WTC11 (cell line): ENCODE measurements at regions of chr22 and their contacts with region 1.

Region 1: DNA sequence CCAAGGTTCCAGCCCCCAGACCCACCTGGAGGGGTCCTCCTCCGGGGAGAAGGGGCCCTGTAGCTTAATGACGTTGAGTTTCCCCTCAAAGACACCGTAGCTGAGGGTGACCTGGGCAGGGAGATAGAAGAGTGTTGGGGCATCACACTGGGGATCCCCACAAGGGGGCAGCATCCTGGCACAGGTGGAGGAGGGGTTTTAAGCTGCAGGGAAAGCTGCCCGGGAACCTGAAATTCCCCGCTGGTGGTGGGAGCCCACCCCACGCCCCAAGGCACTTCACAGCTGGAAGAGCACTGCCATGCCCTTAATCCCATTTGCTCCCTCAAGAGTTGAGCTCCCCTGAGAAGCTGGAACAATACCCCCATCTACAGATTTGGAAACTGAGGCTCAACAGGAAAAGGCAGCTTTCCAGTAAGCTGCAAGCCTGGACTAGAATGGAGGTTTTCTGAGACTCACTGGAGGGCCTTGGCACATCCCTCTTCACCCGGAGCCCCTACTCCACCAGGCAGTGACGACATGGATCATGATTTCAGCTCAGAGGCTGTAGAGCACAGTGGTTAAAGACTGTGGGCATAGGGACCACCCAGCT is 13.7 kb downstream of the MFNG start:
- DNase-seq: peak; percentile 79
- ATAC-seq: peak; percentile 81
- H3K4me3 Mint-ChIP-seq: no peak overlapping the region
- H3K27ac Mint-ChIP-seq: no peak overlapping the region
- H3K4me1 Mint-ChIP-seq: 0 out of 2 replicates have a peak, but pooled peaks cover 3% of the 10 kb centered on the region
- H3K27me3 Mint-ChIP-seq: no peaks in the 10 kb centered on the region; the same call in 1 of the 2 replicates
- CTCF ChIP-seq: peak; percentile 66

Region 2: DNA sequence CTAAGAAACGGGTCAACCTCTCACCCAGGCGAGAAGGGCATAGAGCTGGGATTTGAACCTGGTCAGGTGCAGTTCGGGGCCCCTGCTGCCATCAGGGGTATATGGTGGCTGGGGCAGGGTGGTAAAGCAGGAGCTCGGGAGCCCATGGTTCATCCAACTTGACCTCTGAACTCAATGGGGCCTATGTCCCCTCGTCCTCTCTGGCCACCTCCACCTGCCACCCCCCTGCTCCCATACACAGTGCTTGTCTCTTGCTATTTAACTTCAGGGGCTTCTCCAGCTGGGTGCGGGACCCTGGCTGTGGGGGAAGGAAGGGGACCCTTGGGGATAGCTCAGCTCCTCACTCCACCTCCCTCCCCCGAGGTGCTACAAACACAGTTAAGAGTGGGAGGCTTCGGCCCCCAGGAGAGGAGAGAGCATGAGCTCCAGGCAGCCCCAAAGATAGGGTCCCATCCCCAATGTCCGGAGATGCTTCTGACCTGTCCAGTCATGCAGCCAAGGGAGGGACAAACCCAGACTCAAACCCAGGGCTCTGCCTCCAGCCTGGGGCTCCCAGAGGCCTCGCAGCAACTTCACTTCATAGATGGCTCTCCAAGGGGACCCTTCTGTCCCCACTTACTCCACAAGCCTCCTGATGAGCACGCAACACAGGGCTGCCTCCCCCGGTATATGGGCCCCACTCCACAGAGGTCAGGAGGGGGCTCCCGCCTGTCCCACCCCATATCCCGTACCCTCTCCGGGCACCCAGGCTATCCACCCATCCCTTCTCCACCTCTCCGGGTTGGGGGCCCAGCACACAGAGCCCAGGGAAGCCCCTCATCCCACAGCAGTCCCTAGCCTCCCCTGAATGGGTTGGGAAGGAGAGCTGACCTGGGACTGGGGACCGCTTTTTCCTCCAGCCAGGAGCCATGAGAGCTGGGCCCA is 323.5 kb before region 1 on chr22:
- CTCF ChIA-PET with region 1: no interaction called
- POLR2A ChIA-PET with region 1: no interaction called
- DNase-seq: no peak
- ATAC-seq: no peak
- H3K4me3 Mint-ChIP-seq: no peak overlapping the region
- H3K27ac Mint-ChIP-seq: no peak overlapping the region
- H3K4me1 Mint-ChIP-seq: peaks cover 15% of the 10 kb centered on the region
- H3K27me3 Mint-ChIP-seq: peaks cover 5% of the 10 kb centered on the region
- CTCF ChIP-seq: no peak

Region 3: GRCh38 chr22:37316875-37317371 is 155.6 kb before region 1 on chr22:
- CTCF ChIA-PET with region 1: interaction called, 12 read pairs
- POLR2A ChIA-PET with region 1: no interaction called
- DNase-seq: peak; percentile 80
- ATAC-seq: peak; percentile 86
- H3K4me3 Mint-ChIP-seq: no peak overlapping the region
- H3K27ac Mint-ChIP-seq: no peak overlapping the region
- H3K4me1 Mint-ChIP-seq: peaks cover 11% of the 10 kb centered on the region
- H3K27me3 Mint-ChIP-seq: no peaks in the 10 kb centered on the region; the same call in 1 of the 2 replicates
- CTCF ChIP-seq: peak; percentile 88

Region 4: GRCh38 chr22:37457093-37457893 is 15.2 kb before region 1 on chr22:
- CTCF ChIA-PET with region 1: interaction called, 38 read pairs
- POLR2A ChIA-PET with region 1: no interaction called
- DNase-seq: peak; percentile 94
- ATAC-seq: peak; percentile 98
- H3K4me3 Mint-ChIP-seq: no peak overlapping the region
- H3K27ac Mint-ChIP-seq: no peak overlapping the region
- H3K4me1 Mint-ChIP-seq: peaks cover 2% of the 10 kb centered on the region; the same call in 1 of the 2 replicates
- H3K27me3 Mint-ChIP-seq: no peaks in the 10 kb centered on the region
- CTCF ChIP-seq: peak; percentile 96

Region 5: GRCh38 chr22:37498289-37498909 is 25.9 kb after region 1 on chr22:
- CTCF ChIA-PET with region 1: interaction called, 175 read pairs
- POLR2A ChIA-PET with region 1: no interaction called
- DNase-seq: peak; percentile 90
- ATAC-seq: peak; percentile 92
- H3K4me3 Mint-ChIP-seq: no peak overlapping the region
- H3K27ac Mint-ChIP-seq: no peak overlapping the region
- H3K4me1 Mint-ChIP-seq: peaks cover 34% of the 10 kb centered on the region
- H3K27me3 Mint-ChIP-seq: no peaks in the 10 kb centered on the region
- CTCF ChIP-seq: peak; percentile 78

Region 6: DNA sequence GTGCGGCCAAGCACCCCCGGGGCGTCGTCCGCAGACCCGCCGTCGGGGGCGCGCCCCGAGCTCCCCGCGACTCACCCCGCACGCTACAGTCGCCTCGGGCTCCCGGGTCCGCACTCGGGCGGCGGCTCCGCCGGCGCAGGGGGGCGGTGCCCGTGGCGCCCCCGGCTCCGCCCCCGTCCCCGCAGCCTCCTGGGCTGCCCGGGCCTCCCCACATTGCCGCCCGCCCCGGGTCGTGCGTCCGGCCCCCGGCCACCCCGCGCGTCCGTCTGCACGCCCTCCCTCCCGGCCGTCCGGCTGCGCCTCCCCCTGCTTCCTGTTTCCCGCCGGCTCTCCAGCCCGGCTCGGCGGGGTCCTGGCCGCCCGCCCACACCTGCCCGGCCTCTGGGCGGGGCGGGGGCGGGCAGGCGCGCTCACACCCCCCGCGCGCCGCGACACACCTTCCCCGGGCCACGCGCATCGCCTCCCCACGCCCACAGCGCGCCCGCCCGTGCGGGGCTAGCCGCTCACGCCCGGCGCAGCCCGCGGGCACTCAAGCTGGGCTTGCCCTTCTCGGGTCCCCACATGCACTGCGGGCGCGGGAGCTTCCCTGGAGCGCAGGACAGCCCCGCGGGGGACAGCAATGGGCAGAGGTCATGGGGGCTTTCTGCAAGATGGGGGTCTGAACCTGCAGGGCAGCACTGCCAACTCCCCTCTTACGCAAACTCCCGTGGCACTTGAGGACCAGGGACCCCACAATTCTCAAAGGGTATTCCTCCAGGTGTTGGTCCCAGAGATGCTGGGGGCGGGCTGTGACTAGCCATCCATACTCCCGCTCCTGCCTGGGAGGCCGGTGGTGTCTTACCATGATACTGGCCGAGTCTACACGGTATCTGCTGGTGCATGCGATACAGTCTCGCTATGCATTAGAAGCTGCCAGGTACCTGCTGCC is 47.0 kb after region 1 on chr22 and contains the start of gene CARD10:
- CTCF ChIA-PET with region 1: interaction called, 32 read pairs
- POLR2A ChIA-PET with region 1: no interaction called
- DNase-seq: peak; percentile 46
- ATAC-seq: peak; percentile 51
- H3K4me3 Mint-ChIP-seq: peak within 1 kb of the TSS; percentile 79
- H3K27ac Mint-ChIP-seq: no peak within 1 kb of the TSS
- H3K4me1 Mint-ChIP-seq: peaks cover 11% of the 10 kb centered on the region
- H3K27me3 Mint-ChIP-seq: peaks cover 34% of the 10 kb centered on the region
- CTCF ChIP-seq: no peak
- total RNA-seq, gene CARD10: 14.6 to 17.5 TPM (median 16.0 TPM) in 3 replicates

Region 7: DNA sequence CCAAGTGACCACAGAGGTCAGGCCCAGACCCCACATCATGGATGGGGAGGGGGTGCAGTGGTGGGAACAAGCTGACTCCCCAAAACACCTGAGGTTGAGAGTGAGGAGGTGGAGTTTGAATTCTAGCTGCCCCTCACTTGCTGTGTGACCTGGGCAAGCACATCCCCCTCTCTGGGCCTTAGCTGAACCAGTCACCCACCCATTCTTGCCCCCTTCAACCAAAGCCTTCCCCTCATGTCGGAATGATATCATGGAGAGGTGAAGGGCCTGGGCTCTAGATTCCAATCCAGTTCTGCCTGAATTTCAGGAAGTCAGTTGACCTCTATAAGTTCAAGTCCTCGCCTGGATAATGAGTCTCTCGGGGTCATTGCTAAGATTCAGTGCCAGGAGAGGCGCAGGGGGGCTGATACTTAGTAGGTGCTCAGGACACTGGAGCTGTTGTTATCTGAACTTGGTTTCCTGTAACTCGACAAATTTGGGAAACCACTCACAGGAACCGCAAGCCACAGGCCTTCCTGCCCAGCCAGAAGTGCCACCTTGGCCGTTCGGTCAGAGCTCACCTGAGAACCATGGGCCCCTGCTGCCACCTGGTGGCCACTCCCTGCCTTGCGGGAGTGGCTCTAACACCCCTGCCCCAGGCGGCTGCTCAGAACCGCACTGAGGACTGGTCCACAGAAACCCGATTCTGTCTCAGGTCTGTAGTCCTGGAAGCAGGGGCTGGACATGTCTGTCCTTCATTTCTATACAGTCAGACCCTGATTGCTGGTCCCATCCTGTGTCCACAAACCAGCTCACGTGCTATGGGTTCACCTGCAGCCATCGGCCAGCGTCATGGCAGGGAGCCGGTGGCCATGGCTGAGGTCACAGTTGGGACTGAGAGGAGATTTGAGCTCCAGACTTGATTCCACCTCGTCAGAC is 94.7 kb after region 1 on chr22:
- CTCF ChIA-PET with region 1: interaction called, 59 read pairs
- POLR2A ChIA-PET with region 1: no interaction called
- DNase-seq: peak; percentile 92
- ATAC-seq: peak; percentile 81
- H3K4me3 Mint-ChIP-seq: no peak overlapping the region
- H3K27ac Mint-ChIP-seq: no peak overlapping the region
- H3K4me1 Mint-ChIP-seq: peaks cover 46% of the 10 kb centered on the region
- H3K27me3 Mint-ChIP-seq: peaks cover 10% of the 10 kb centered on the region
- CTCF ChIP-seq: peak; percentile 90